Mammary epithelial cell (primary cell): ENCODE measurements at regions of chr15 and their contacts with region 1.

Region 1: DNA sequence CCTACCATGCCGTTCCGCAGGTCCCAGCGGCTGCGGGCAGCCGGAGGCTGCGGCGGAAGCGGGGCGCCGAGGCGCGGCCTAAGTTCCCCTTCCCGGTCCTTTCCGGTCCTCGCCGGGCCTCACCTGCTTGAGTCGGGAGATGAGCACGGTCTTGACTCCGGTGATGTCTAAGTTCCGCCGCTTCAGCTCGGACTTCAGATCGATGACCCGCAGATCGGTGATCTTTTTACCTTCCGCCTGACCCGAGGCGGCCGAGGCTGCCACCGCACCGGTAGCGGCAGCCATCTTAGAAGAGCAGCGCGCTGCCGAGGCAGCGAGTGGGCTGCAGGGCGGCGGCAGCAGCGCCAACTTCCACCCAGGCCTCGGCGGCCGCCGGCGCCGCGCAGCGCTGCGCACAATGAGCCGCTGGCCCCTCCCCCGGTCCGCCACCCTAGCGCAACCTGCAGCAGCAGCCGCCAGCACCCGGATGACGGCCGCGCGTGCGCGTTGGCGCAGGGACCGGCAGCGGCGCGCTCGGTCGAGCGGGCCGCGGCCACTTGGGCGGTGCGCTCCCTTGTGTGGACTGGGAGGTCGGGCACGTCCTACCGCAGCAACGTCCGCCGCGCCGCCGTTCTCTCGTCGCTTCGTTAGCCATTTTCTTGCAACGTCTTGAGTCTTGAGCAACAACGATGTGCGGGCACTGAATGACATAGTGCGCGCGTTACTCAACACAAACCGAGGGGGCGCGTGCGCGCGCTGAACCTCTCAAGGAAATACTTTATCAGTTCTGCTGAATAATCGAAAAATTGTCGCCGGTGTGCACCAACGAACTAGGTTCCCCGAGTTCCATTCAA is at the start of gene SLTM:
- DNase-seq: peak; percentile 96
- H3K4me3 ChIP-seq: peak within 1 kb of the TSS; percentile 73 to 98 (median 80)
- H3K27ac ChIP-seq: peak within 1 kb of the TSS; percentile 76
- H3K4me1 ChIP-seq: peaks cover 7% of the 10 kb centered on the region
- H3K27me3 ChIP-seq: no peaks in the 10 kb centered on the region
- CTCF ChIP-seq: peak in 1 of 2 donors; percentile 19
- total RNA-seq, gene SLTM: 46.5 to 69.1 TPM

Region 2: DNA sequence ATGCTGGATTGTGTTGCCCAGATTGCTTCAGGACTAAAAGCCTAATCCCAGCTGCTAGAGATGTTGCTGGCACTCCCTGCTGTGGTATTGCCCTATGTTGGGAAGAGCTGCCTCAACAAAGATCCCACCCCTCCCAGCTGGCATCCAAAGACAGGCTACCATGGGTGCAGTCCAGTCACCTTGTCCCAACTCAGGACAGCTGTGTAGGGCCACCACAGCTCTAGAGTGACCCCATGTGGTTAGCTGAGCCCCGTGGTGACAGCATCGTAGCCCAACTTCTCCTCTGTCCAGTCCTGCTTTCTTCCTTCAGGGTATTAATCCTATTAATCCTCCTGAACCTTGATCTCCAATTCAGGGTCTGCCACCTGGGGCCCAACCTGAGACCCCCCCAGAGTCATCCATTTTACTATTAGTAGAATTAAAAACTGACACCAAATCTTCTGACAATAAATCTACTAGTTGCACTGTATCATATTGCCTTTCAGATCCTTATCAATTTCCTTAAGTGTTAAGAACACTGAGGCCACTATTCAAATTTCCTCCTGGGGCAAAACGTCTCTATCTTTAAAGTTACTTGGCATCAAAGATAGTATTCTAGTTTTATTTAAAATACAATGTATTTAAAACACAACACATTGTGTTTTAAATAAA is 711.8 kb before region 1 on chr15:
- CTCF ChIA-PET with region 1: no interaction called
- dilution Hi-C with region 1: no loop called
- in situ Hi-C with region 1: no loop called
- intact Hi-C with region 1: loop called (anchors 5 kb)
- DNase-seq: no peak
- H3K4me3 ChIP-seq: no peak overlapping the region
- H3K27ac ChIP-seq: no peak overlapping the region
- H3K4me1 ChIP-seq: peaks cover 8% of the 10 kb centered on the region
- H3K27me3 ChIP-seq: no peaks in the 10 kb centered on the region
- CTCF ChIP-seq: peak; percentile 57 to 83

Region 3: GRCh38 chr15:58793862-58794261 is 139.6 kb before region 1 on chr15:
- CTCF ChIA-PET with region 1: no interaction called
- dilution Hi-C with region 1: no loop called
- in situ Hi-C with region 1: no loop called
- intact Hi-C with region 1: loop called (anchors 1 kb)
- DNase-seq: peak; percentile 98
- H3K4me3 ChIP-seq: peak overlapping the region in 2 of 3 experiments; percentile 23 to 31
- H3K27ac ChIP-seq: peak overlapping the region; percentile 99
- H3K4me1 ChIP-seq: peaks cover 16% of the 10 kb centered on the region
- H3K27me3 ChIP-seq: no peaks in the 10 kb centered on the region
- CTCF ChIP-seq: no peak

Region 4: DNA sequence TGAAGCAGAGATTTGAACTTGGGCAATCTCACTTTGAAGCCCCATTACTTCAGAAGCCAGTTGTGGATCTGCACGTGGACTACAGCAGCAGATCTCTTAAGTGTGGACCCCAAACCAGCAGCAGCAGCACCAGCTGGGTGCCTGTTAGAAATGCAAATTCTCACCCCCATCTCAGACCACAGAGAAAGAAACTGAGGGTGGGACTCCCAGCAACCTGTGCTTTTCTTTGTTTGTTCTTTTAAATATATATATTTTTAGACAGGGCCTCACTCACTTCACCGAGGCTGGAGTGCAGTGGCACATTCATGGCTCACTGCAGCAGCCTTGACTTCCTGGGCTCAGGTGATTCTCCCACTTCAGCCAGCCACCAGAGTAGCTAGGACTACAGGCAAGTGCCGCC is 53.2 kb before region 1 on chr15:
- CTCF ChIA-PET with region 1: no interaction called
- dilution Hi-C with region 1: loop called (anchors 5 kb)
- in situ Hi-C with region 1: no loop called
- intact Hi-C with region 1: no loop called
- DNase-seq: no peak
- H3K4me3 ChIP-seq: no peak overlapping the region
- H3K27ac ChIP-seq: no peak overlapping the region
- H3K4me1 ChIP-seq: peaks cover 5% of the 10 kb centered on the region
- H3K27me3 ChIP-seq: no peaks in the 10 kb centered on the region
- CTCF ChIP-seq: no peak